Activated B cell treated with CpG ODN at 0.5 μM for 24 hours (primary cell): ENCODE measurements at regions of chr7 and their contacts with region 1.

Region 1: DNA sequence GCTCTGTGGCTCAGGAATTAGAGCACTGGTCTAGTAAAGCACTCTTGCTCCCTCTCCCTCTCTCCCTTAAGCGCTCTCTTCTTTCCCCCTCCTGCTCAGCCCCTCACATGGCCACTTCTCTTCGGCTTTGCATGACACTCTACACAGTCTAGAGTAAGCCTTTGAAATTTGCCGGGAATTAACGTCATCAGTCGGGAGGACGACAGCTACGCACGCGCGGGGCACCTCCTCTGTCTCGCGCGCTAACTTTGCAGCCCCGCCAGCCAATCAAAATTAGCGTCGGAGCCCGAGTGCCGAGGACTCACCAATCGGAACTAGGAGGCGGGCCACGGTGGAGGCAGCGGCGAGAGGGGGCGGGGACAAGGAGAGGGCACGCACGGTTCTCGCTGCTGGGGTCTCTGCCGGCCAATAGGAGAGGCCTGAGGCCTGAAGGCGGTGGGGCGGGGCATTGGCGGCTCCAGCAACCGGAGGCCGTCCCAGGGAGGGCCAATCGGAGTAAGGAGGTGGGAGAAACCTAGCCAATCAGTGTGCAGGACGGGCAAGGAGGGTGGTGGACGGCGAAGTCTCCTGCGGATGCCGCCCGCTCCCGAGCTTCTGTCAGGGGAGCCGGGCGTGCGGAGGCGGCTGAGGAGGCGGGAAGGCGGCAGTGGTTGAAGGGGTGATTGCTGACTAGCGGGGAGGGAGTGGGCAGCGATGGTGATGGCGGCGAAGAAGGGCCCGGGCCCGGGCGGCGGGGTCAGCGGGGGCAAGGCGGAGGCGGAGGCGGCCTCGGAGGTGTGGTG is at the start of gene AGFG2:
- DNase-seq: peak; percentile 97
- ATAC-seq: peak; percentile 98
- H3K4me3 Mint-ChIP-seq: peak within 1 kb of the TSS; percentile 100
- H3K27ac Mint-ChIP-seq: peak within 1 kb of the TSS; percentile 87
- H3K4me1 Mint-ChIP-seq: peaks cover 32% of the 10 kb centered on the region
- H3K27me3 Mint-ChIP-seq: no peaks in the 10 kb centered on the region
- CTCF ChIP-seq: no peak
- total RNA-seq, gene AGFG2: 9.5 and 10.8 TPM in 2 replicates

Region 2: GRCh38 chr7:100478966-100479665 is 59.7 kb before region 1 on chr7 and contains the start of gene TSC22D4:
- CTCF ChIA-PET with region 1: no interaction called
- POLR2A ChIA-PET with region 1: interaction called, 5 read pairs
- intact Hi-C with region 1: loop called (anchors 1 kb)
- DNase-seq: peak; percentile 81
- ATAC-seq: peak; percentile 73
- H3K4me3 Mint-ChIP-seq: peak within 1 kb of the TSS; percentile 93
- H3K27ac Mint-ChIP-seq: peak within 1 kb of the TSS; percentile 86
- H3K4me1 Mint-ChIP-seq: peaks cover 41% of the 10 kb centered on the region
- H3K27me3 Mint-ChIP-seq: no peaks in the 10 kb centered on the region
- CTCF ChIP-seq: no peak
- total RNA-seq, gene TSC22D4: 60.2 and 68.7 TPM in 2 replicates

Region 3: DNA sequence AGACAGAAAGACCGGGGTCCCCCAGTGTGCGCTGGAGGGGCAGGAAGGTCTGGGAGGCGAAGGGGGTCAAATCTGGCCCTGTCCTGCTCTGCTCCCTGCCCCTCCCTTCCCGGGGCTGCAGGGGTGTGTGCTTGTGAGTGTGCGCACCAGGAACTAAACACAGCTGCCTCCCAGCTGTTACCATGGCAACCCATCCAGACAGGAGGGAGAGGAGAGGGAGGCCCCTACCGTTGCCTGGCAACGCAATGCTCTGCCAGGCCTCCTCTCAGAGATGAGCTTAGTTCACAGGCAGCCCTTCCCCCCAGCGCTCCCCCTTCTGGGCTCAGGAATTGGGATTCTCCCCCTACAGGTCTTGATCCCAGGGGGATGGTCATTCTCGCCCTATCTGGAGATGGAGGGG is 49.0 kb before region 1 on chr7:
- CTCF ChIA-PET with region 1: no interaction called
- POLR2A ChIA-PET with region 1: interaction called, 11 read pairs
- intact Hi-C with region 1: no loop called
- DNase-seq: no peak
- ATAC-seq: peak; percentile 35
- H3K4me3 Mint-ChIP-seq: no peak overlapping the region
- H3K27ac Mint-ChIP-seq: no peak overlapping the region
- H3K4me1 Mint-ChIP-seq: peaks cover 6% of the 10 kb centered on the region
- H3K27me3 Mint-ChIP-seq: peaks cover 26% of the 10 kb centered on the region
- CTCF ChIP-seq: no peak

Region 4: DNA sequence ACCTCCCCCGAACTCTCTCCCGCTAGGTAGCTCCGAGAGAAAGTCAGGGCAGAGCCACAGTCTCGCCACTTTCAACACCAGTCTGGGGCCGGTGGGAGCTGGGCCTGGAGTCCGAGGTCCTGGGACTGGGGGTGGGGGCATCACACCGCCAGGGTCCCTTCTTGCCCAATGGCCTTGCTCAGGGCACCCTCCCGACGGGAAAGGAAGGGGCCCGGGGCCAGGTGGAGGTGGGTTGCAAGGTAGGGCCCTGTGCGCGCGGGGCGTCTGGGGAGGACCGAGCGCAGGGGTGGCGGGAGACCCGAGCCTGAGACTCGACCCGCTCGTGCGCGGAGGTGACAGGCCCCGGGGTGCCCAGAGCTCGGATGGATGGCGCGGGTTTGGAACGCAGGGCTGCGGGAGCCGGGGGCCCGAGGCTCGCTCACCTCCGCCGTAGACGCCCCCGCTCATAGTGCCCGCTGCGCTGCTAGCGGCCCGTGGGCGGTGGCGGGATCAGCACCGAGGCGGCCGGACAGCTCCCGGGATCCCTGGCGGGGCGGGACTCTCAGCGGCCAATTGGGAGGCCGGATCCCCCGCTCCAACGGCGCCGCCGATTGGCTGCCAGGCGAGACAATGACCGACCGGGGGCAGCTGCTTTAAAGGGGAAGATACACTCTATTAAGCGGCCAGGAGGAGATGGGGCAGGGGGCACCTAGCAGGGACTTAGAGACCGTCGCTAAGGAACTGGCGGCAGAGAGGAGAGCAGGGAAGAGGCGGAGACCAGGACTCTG is 117.2 kb after region 1 on chr7 and contains the start of gene ACTL6B:
- CTCF ChIA-PET with region 1: no interaction called
- POLR2A ChIA-PET with region 1: no interaction called
- intact Hi-C with region 1: no loop called
- DNase-seq: no peak
- ATAC-seq: peak; percentile 42
- H3K4me3 Mint-ChIP-seq: no peak within 1 kb of the TSS
- H3K27ac Mint-ChIP-seq: no peak within 1 kb of the TSS
- H3K4me1 Mint-ChIP-seq: no peaks in the 10 kb centered on the region
- H3K27me3 Mint-ChIP-seq: peaks cover 36% of the 10 kb centered on the region
- CTCF ChIP-seq: no peak
- total RNA-seq, gene ACTL6B: not detected in 2 replicates

Region 5: DNA sequence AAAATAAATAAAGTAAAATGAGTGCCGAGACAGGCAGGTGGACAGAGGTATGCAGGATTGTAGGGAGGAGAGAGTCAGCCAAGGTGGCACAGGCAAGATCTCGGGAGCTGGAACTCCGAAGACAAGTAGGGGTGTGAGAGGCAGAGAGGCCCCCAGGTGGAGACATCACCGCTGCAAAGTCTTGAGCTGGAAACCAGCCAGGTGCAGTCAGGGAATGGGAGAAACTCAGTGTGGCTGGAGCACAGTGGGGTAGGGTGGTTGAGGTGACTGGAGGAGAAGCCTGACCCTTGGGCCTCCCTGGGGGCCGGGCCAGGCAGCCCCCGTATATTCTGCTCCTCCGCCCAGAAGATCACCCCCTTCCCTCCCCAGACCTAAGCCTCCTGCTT is 284.3 kb after region 1 on chr7:
- CTCF ChIA-PET with region 1: no interaction called
- POLR2A ChIA-PET with region 1: no interaction called
- intact Hi-C with region 1: no loop called
- DNase-seq: no peak
- ATAC-seq: no peak
- H3K4me3 Mint-ChIP-seq: no peak overlapping the region
- H3K27ac Mint-ChIP-seq: no peak overlapping the region
- H3K4me1 Mint-ChIP-seq: peaks cover 14% of the 10 kb centered on the region
- H3K27me3 Mint-ChIP-seq: peaks cover 27% of the 10 kb centered on the region
- CTCF ChIP-seq: no peak